Activated T-helper 2 cell treated with anti-CD3 and anti-CD28 coated beads, Interferon-gamma antibody, Interleukin-2, Interleukin-4, amounts not matched to agents 10 μg/mL and 5 μg/mL and 100 μg/mL, durations not matched to agents 14 hours and 24 hours and 36 hours (primary cell): ENCODE measurements at regions of chr3 and their contacts with region 1.

Region 1: DNA sequence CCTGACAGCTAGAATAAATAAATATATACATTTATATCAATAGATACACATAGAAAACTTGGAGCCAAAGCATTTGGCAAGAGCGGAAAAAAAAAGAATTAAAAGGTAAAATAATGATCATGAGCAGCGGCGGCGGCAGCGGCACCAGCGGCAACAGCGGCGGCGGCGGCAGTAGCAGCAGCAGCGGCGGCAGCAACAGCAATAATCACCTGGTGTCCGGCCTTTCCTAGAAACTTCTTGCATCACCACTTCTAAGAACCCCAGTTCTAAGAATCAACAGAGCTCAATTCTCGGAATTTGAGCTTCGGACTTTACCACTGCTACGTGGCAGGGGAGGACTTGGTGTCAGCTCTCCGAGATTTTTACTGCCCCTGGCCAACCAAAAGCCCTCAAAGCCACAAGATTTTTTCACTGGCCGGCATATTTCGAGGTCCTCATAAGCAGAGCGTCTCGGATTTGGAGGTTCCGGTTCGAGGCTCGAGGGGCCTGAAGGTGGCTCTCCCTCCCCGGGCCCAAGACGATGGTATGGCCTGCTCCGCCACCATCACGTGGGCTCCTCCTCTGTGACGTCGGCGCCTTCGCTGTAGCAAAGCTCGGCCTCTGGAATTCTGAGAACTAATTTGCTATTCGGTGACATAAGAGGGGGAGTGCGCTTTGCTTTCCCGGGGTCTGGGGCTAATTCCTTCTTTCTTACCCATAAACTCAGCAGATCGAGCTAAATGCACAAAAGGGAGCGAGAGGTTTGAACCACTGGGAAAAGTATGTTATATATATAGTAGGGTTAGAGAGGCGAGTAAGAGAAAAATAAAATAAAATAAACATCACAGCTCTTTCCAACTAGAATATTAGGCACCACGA is at the start of gene BCL6:
- DNase-seq: peak; percentile 90
- H3K4me3 Mint-ChIP-seq: peak within 1 kb of the TSS; percentile 94
- H3K27ac Mint-ChIP-seq: peak within 1 kb of the TSS; percentile 99
- H3K4me1 Mint-ChIP-seq: peaks cover 55% of the 10 kb centered on the region
- H3K27me3 Mint-ChIP-seq: no peaks in the 10 kb centered on the region
- total RNA-seq, gene BCL6: 12.0 and 16.5 TPM in 2 replicates

Region 2: DNA sequence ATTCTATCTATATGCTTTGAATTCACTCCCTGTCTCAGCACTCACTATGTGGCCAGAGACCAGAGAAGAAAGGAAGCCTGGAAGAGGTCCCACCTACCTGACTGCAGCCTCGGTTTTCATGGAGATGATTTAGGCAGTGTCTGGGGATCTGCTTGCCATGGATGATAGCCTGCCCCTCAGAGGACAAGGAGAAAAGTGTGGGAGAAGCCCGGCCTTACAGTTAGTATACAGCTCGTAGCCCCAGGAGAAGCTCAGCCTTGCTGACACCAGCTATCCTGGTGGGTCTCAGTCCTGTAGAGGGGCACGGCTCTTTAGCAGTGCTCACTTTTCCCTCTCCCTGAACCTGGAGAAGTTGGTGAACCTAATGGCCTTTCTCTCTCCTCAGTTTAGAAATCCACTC is 403.2 kb before region 1 on chr3:
- intact Hi-C with region 1: no loop called
- DNase-seq: no peak
- H3K4me3 Mint-ChIP-seq: no peak overlapping the region
- H3K27ac Mint-ChIP-seq: no peak overlapping the region
- H3K4me1 Mint-ChIP-seq: no peaks in the 10 kb centered on the region
- H3K27me3 Mint-ChIP-seq: peaks cover 33% of the 10 kb centered on the region

Region 3: DNA sequence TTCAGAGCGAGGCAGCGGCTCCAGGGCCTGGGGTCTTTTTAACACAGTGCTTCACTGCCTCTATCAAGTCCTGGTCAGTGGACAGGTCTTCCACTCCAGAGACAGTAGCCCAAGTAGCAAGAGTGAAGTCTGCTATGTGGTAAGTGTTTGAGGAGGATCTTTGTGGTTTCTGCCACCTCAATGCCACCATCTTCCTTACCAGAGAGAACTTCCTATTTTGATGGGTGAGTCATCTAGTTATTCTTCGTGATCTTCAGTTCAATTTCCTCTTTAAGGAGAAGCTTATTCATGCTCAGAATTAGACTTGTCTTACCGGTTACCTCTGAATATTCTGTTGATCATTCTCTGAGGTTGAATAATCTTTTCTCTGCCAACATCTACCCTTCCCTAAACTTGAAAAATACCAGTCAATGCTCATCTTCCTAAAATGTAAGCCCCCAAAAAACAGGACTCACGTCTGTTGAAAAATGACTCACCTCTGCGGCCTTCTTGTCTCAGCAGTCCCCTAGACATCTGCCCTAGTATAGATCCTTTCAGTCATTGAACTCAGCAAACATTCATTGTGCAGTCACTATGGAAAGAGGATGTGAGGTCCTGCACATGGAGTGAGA is 32.0 kb after region 1 on chr3:
- intact Hi-C with region 1: loop called (anchors 1 kb)
- DNase-seq: peak; percentile 45
- H3K4me3 Mint-ChIP-seq: peak overlapping the region; percentile 20
- H3K27ac Mint-ChIP-seq: peak overlapping the region; percentile 89
- H3K4me1 Mint-ChIP-seq: peaks cover 47% of the 10 kb centered on the region
- H3K27me3 Mint-ChIP-seq: no peaks in the 10 kb centered on the region

Region 4: DNA sequence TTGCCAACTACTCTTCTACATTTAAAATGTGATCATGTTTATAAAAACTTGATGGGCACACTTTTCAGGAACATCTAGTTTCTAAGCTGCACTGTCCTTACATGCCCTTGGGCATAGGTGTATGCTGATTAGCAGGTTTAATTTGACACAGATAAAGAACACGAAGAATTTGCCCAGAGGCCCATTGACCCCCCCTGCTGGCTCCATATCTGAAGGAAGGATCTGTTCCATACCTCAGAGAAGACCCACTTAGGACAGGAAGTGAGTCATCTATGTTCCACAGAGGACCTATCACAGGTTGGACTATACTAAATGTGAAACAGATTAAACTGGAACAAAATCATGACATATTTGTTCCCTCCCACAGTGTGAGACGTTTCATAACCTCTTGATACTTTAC is 315.7 kb after region 1 on chr3:
- intact Hi-C with region 1: loop called (anchors 1 kb)
- DNase-seq: peak; percentile 59
- H3K4me3 Mint-ChIP-seq: peak overlapping the region; percentile 51
- H3K27ac Mint-ChIP-seq: peak overlapping the region; percentile 80
- H3K4me1 Mint-ChIP-seq: peaks cover 38% of the 10 kb centered on the region
- H3K27me3 Mint-ChIP-seq: no peaks in the 10 kb centered on the region

Region 5: DNA sequence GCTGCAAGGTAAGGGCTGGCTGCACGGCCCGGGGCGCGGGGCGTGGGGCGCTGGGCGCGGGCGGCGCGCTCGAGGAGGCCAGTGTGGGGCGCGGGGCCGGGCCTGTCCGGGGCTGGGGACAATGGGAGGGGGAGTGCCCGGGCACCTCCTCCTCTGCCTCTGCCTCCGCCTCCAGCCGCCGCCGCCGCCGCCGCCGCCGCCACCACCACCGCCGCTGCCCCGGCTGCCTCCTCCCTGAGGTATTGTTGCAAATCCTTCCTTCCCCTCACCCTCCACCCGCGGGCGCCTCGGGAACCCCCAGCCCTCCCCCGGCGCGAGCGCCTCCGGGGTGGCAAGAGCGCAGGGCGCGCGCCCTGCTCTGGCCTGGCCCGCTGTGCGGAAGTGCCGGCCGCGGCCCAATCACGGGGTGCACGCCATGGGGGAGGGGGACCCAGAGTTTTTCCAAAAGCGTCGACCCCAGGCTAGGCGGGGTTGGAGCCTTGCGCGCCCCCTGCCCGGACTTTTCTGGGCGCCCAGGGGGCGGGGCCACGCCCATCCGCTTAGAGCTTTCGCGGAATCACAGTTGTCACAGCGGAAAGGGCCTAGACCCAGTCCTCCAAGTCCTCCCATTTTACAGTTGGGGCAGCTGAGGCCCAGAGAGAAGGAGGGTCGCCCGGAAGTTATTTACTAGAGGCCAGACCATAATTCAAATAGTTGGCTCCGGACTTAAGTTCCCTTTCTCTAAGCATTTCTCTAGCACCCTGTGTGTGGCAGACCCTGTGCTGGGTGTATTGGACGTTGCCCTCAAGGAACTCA is 408.8 kb after region 1 on chr3 and contains the start of gene LPP:
- intact Hi-C with region 1: loop called (anchors 1 kb)
- DNase-seq: peak; percentile 87
- H3K4me3 Mint-ChIP-seq: peak within 1 kb of the TSS; percentile 91
- H3K27ac Mint-ChIP-seq: peak within 1 kb of the TSS; percentile 93
- H3K4me1 Mint-ChIP-seq: peaks cover 63% of the 10 kb centered on the region
- H3K27me3 Mint-ChIP-seq: no peaks in the 10 kb centered on the region
- total RNA-seq, gene LPP: 54.5 and 59.0 TPM in 2 replicates

Region 6: DNA sequence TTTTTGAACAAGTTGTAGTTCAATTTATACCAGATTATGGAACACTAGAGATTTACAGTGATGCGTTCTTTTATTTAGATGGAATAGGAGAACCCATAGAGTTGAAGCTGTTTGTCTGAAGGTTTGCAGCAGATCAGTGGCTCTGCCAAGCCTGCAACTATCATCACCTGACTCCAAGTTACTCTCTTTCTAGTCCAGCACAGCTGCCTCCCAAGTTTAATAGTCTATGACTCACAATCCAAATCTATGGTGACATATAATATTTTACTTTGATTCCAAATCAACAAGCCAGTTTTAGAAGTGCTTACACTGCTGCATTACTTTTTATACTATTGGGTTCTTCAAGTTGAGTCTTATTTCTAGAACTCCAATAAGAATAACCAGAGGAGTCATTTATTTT is 809.0 kb after region 1 on chr3:
- intact Hi-C with region 1: loop called (anchors 10 kb)
- DNase-seq: no peak
- H3K4me3 Mint-ChIP-seq: no peak overlapping the region
- H3K27ac Mint-ChIP-seq: no peak overlapping the region
- H3K4me1 Mint-ChIP-seq: peaks cover 35% of the 10 kb centered on the region
- H3K27me3 Mint-ChIP-seq: no peaks in the 10 kb centered on the region

Region 7: GRCh38 chr3:188720636-188721035 is 975.2 kb after region 1 on chr3:
- intact Hi-C with region 1: loop called (anchors 10 kb)
- DNase-seq: no peak
- H3K4me3 Mint-ChIP-seq: no peak overlapping the region
- H3K27ac Mint-ChIP-seq: no peak overlapping the region
- H3K4me1 Mint-ChIP-seq: peaks cover 27% of the 10 kb centered on the region
- H3K27me3 Mint-ChIP-seq: no peaks in the 10 kb centered on the region